ENCODE measurements at regions of chr6 and their contacts with region 1.

Region 1: DNA sequence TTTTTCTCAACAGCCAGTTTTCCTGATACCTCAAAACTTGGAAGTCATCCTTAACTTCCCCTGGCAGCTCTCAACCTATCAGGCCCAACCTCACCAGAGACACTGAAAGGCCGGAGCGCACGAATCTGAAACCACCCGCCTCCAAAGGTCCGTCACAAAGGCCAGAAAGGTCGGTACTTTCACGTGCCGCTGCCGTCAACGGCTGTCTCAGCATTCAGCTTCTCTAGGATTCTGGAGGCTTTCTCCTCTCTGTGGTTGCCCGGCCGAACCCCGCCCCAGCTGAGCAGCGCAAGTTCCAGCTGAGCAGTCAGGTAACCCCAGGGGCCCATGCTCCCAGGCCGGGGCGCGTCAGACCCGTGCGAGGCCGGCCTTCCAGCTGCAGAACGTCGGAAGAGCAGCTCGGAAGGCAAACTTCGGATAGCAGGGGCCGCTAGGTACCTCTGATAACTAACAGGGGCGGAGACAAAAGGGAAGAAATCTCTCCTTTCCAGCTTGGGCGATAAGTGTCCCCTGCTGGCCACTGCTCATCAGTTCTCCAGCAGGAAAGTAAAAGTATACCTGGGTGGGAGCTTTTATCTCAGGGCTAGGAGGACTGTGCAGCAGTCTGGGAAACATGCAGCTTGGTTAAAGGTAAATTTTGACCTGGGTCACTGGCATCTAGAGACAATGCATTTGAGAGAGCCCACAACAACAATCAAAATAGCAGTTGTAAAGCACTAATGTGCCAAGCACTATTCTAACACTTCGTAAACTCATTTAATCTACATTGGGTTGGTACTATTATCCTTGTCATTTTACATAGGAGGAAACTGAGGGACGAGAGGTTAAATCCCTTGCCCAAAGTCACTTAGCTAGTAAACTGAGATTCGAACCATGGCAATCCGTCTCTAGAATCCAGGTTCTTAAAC is 16.1 kb downstream of the ZSCAN12 start:
- DNase-seq: peak; percentile 88
- H3K4me3 ChIP-seq: peak overlapping the region; percentile 46 to 59 (median 53)
- H3K27ac ChIP-seq: peak overlapping the region; percentile 66
- H3K4me1 ChIP-seq: no peaks in the 10 kb centered on the region
- H3K27me3 ChIP-seq: no peaks in the 10 kb centered on the region
- CTCF ChIP-seq: peak; percentile 60 to 71

Region 2: DNA sequence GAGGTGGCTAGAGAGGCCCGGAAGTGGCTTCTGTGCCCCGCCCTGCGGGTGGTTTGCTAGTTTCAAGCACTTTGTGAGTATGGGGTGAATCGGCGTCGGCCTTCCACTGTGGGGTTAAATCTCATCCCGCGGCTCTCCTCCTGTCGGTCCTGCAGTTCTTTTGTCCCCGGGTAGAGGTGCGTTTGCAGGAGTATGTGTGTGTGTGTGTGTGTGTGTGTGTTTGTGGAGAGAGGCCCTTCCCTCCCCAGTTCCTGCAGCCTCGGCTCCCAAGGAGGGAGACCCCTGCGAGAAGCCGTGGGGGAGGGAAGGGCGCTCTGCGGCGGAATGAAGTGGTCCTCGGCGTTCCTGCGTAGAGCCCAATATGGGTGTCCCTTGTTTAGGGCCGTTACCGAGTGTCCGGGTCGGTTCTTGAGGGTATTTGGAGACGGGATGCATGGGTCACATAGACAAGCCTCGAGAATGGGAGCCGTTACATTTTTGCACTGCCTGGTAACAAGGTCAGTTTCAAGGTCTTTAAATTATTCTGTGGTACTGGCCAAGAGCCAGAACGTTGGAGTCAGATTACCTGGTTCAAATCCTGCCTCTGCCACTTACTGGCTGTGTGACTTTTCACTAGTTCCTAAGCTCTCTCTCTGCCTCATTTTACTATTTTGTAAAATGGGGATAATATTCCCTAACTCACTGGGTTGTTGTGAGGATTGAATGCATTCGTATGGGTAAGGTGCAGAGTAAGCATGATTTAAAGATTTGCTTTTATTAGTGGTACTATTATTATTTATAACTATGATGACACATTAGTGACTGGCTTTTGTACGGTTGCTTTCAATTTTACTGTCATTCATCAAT is 33.4 kb before region 1 on chr6 and contains the start of gene ZKSCAN3:
- CTCF ChIA-PET with region 1: no interaction called
- dilution Hi-C with region 1: no loop called
- in situ Hi-C with region 1: no loop called
- intact Hi-C with region 1: loop called (anchors 1 kb)
- DNase-seq: peak; percentile 76
- H3K4me3 ChIP-seq: peak within 1 kb of the TSS; percentile 62 to 90 (median 74)
- H3K27ac ChIP-seq: peak within 1 kb of the TSS; percentile 42
- H3K4me1 ChIP-seq: peaks cover 13% of the 10 kb centered on the region
- H3K27me3 ChIP-seq: peaks cover 1% of the 10 kb centered on the region
- CTCF ChIP-seq: no peak
- total RNA-seq, gene ZKSCAN3: 4.0 to 4.1 TPM

Region 3: DNA sequence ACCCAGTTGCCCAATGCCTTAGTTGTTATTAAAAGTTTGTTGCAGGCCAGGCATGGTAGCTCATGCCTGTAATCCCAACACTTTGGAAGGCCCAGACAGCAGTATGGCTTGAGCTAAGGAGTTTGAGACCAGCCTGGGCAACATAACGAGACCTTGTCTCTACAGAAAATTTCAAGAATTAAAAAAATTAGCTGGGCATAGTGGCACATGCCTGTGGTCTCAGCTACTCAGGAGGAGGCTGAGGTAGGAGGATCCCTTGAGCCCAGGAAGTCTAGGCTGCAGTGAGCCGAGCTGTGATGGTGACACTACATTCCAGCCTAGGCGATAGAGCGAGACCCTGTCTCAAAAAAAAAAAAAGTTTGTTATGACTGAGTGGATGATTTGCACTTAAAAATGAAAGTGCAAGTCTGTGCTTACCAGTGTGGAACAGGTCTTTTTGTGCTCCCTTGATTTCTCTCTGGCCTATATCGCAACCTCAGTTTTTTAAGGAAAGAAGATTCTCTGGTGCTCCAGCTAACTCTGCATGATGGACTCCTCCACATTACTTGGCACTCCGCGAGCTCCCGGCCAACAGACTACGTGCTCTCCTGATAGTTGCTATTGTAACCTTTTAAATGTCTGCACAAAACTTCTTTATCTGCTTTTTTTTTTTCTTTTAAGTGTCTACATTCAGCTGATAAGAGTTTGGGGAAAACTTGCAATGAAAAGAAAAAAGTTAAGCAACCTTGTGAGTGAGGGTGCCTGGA is 11.6 kb before region 1 on chr6:
- CTCF ChIA-PET with region 1: interaction called, 10 read pairs
- dilution Hi-C with region 1: no loop called
- in situ Hi-C with region 1: no loop called
- intact Hi-C with region 1: no loop called
- DNase-seq: no peak
- H3K4me3 ChIP-seq: no peak overlapping the region
- H3K27ac ChIP-seq: no peak overlapping the region
- H3K4me1 ChIP-seq: no peaks in the 10 kb centered on the region
- H3K27me3 ChIP-seq: no peaks in the 10 kb centered on the region
- CTCF ChIP-seq: no peak

Region 4: DNA sequence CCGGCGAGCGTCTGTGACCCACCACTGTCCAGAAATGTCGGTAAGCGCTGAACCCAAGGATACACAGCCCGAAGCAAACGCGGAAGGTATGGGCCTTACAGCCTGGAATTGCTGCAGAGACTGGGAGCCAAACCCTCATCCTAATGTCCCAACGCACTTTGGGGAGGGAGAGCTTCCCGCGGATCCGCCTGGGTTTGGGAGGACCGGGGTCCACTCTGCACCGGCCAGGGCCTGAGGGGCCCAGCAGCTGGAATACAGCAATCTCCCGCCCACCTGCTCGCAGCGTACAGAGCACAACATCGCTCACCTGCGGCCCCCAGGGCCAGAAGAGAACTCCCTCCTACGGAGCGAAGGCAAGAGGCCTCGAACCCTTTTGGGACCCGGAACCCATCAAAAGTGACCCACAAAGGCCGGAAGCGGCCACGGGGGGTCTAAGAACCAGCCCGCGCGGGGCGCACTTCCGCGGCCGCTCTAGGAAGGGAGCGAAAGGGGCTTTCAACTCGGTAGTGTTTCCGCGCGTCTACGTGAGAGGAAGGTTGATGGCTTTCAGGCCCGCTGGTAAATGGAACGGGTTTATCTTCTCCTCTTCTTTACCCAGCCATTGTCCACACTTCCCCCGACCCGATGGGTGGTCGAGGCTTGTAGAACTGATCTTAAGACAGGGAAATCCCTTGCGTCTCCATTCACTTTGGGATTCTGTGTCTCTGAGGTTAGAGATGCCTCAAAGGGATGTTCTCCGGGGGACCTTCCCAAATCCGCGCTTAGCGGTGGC is 16.0 kb after region 1 on chr6 and contains the start of gene ZSCAN12:
- CTCF ChIA-PET with region 1: no interaction called
- dilution Hi-C with region 1: no loop called
- in situ Hi-C with region 1: no loop called
- intact Hi-C with region 1: loop called (anchors 1 kb)
- DNase-seq: peak; percentile 79
- H3K4me3 ChIP-seq: peak within 1 kb of the TSS; percentile 76 to 91 (median 78)
- H3K27ac ChIP-seq: peak within 1 kb of the TSS; percentile 84
- H3K4me1 ChIP-seq: peaks cover 27% of the 10 kb centered on the region
- H3K27me3 ChIP-seq: no peaks in the 10 kb centered on the region
- CTCF ChIP-seq: peak; percentile 43 to 75
- total RNA-seq, gene ZSCAN12: 5.3 to 8.5 TPM